GM13976 (cell line): ENCODE measurements at regions of chr12 and their contacts with region 1.

Region 1: GRCh38 chr12:32755654-32756475 is at the start of gene YARS2:
- DNase-seq: peak; percentile 85
- CTCF ChIP-seq: peak; percentile 76

Region 2: GRCh38 chr12:32918890-32919801 is 163.3 kb after region 1 on chr12:
- in situ Hi-C with region 1: loop called (anchors 25 kb)
- DNase-seq: peak; percentile 33
- CTCF ChIP-seq: no peak

Region 3: GRCh38 chr12:33026791-33027190 is 270.9 kb after region 1 on chr12:
- in situ Hi-C with region 1: no loop called
- DNase-seq: no peak
- CTCF ChIP-seq: no peak

Region 4: GRCh38 chr12:34016361-34016760 is 1260.5 kb after region 1 on chr12:
- in situ Hi-C with region 1: loop called (anchors 10 kb)
- DNase-seq: no peak
- CTCF ChIP-seq: no peak